Naive thymus-derived CD4-positive, alpha-beta T cell (primary cell): ENCODE measurements at regions of chr3 and their contacts with region 1.

Region 1: DNA sequence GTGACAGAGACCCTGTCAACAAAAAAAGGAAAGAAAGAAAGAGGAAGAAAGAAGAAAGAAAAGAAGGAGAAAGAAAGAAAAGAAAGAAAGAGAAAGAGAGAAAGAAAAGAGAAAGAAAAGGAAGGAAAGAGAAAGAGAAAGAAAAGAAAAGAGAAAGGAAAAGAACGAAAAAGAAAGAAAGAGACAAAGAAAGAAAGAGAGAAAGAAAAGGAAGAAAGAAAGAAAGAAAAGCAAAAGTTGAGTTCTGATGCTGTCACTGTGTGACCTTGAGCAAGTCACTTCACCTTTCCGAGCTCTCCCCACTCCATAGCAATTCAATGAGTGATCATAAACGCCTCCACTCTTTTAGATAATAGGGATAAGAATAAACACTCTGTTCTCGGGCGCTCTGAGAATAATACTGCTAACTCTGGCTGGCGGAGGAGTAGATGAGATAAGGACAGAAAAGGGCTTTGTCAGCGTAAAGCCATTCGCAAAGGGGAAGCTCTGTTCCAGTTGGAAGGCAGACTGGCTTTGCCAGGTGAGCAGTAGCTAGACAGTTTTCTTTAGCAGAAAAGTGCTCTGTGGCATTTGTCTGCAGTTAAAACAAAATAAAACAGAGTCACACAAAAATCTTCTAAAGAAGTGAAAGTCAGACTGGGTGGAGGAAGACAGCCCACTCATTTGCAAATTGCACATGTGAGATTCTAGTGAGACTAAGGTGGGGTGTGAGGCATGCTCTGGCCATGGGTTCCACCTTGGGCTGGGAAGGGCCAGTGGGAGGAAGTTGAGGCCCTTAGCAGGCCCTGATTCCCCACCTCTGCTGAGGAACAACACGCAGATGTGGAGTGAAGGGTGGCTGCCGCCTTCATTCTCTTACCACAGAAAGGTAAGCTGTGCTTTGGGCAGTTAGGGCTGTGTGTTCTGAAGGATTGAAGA is 9.6 kb upstream of the FLNB start:
- DNase-seq: peak in 3 of 9 donors; percentile 14 to 25 (median 18)
- ATAC-seq: peak; percentile 59
- H3K4me3 ChIP-seq: peak overlapping the region; percentile 3
- H3K4me3 Mint-ChIP-seq: peak overlapping the region; percentile 72 to 87 (median 79)
- H3K27ac ChIP-seq: no peak overlapping the region
- H3K27ac Mint-ChIP-seq: peak overlapping the region; percentile 36 to 85 (median 72)
- H3K4me1 ChIP-seq: peaks cover 9 to 10% of the 10 kb centered on the region in 2 donors
- H3K4me1 Mint-ChIP-seq: peaks cover 16 to 26% (median 19%) of the 10 kb centered on the region in 7 donors
- H3K27me3 ChIP-seq: no peaks in the 10 kb centered on the region
- H3K27me3 Mint-ChIP-seq: no peaks in the 10 kb centered on the region

Region 2: DNA sequence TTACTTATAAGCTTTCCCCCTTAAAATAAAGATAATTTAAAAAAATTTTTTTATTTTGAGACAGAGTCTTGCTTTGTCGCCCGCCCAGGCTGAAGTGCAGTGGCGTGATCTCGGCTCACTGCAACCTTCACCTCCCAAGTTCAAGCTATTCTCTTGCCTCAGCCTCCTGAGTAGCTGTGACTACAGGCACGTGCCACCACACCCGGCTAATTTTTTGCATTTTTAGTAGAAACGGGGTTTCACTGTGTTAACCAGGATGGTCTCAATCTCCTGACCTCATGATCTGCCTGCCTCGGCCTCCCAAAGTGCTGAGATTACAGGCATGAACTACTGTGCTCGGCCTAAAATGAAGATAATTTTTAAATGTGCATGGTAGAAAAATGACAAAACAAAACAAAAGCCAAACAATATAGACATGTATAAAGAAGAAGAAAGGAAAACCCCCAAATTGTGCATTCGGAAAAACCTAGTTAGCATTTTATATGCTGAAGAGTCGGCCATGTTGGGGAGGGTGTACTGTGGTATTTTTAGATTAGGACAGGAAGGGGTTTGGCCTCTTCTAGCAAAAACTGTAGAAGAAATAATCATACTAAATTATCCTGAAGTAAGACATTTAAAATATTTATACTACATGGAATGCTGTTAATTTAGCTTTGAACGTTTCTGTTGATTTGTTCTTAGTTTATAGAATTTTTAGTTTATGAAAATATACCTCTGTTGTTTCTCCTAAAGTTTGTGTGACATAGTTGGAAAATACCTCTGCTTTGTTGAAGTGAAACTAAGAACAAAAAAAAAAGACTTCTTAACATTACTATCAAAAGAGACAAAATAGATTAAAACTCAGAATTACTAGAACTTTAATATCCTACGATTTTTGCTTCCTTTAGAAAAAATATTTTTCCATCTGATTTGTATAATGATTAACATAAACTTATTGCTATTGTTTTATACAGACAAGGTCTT is 763.7 kb before region 1 on chr3:
- CTCF ChIA-PET with region 1: no interaction called
- POLR2A ChIA-PET with region 1: no interaction called
- intact Hi-C with region 1: no loop called
- DNase-seq: no peak
- ATAC-seq: no peak
- H3K4me3 ChIP-seq: no peak overlapping the region
- H3K4me3 Mint-ChIP-seq: no peak overlapping the region
- H3K27ac ChIP-seq: no peak overlapping the region
- H3K27ac Mint-ChIP-seq: peak overlapping the region in 2 of 9 donors; percentile 25 to 31
- H3K4me1 ChIP-seq: peaks cover 0 to 3% of the 10 kb centered on the region in 2 donors
- H3K4me1 Mint-ChIP-seq: peaks cover 0 to 30% (median 22%) of the 10 kb centered on the region in 7 donors
- H3K27me3 ChIP-seq: no peaks in the 10 kb centered on the region
- H3K27me3 Mint-ChIP-seq: no peaks in the 10 kb centered on the region

Region 3: GRCh38 chr3:57637391-57637790 is 361.2 kb before region 1 on chr3:
- CTCF ChIA-PET with region 1: no interaction called
- POLR2A ChIA-PET with region 1: no interaction called
- intact Hi-C with region 1: no loop called
- DNase-seq: no peak
- ATAC-seq: no peak
- H3K4me3 ChIP-seq: no peak overlapping the region
- H3K4me3 Mint-ChIP-seq: no peak overlapping the region
- H3K27ac ChIP-seq: no peak overlapping the region
- H3K27ac Mint-ChIP-seq: no peak overlapping the region
- H3K4me1 ChIP-seq: no peaks in the 10 kb centered on the region
- H3K4me1 Mint-ChIP-seq: peaks cover 0 to 9% (median 0%) of the 10 kb centered on the region in 7 donors
- H3K27me3 ChIP-seq: no peaks in the 10 kb centered on the region
- H3K27me3 Mint-ChIP-seq: no peaks in the 10 kb centered on the region

Region 4: DNA sequence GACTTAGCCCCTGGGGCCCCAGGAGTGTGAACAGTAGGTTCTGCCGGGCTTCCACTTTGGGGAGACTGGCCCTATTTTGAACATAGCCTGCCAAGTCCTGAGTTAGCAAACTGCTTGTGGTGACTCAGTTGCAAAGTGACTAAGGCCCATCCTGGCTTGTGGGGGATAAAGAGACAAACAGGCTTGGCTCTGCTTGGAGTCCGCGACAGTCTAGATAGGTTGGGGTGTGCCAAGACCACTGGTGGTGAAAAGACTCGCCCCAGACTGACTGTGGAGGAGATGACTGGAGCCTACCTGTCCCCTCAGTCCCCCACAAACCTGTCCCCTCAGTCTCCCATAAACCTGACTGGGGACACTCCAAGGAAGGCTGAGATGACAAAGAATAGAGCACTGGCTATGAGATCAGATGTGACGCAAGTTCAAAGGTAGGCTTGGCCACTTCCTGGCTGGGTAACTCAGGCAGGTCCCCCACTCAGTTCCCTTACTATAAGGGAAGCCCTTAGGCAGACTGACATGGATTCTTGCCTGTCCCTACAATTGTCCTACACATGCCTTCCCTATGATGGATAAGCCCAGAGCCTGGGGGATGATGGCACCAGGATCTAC is 207.9 kb after region 1 on chr3:
- CTCF ChIA-PET with region 1: no interaction called
- POLR2A ChIA-PET with region 1: no interaction called
- intact Hi-C with region 1: loop called in 1 of 2 experiments (anchors 1 kb)
- DNase-seq: peak in 1 of 9 donors; percentile 32
- ATAC-seq: peak; percentile 20
- H3K4me3 ChIP-seq: no peak overlapping the region
- H3K4me3 Mint-ChIP-seq: no peak overlapping the region
- H3K27ac ChIP-seq: no peak overlapping the region
- H3K27ac Mint-ChIP-seq: no peak overlapping the region
- H3K4me1 ChIP-seq: no peaks in the 10 kb centered on the region
- H3K4me1 Mint-ChIP-seq: peaks cover 0 to 8% (median 0%) of the 10 kb centered on the region in 7 donors
- H3K27me3 ChIP-seq: no peaks in the 10 kb centered on the region
- H3K27me3 Mint-ChIP-seq: peaks cover 6 to 21% (median 18%) of the 10 kb centered on the region in 5 donors